Brain microvascular endothelial cell (primary cell): ENCODE measurements at regions of chr15 and their contacts with region 1.

Region 1: DNA sequence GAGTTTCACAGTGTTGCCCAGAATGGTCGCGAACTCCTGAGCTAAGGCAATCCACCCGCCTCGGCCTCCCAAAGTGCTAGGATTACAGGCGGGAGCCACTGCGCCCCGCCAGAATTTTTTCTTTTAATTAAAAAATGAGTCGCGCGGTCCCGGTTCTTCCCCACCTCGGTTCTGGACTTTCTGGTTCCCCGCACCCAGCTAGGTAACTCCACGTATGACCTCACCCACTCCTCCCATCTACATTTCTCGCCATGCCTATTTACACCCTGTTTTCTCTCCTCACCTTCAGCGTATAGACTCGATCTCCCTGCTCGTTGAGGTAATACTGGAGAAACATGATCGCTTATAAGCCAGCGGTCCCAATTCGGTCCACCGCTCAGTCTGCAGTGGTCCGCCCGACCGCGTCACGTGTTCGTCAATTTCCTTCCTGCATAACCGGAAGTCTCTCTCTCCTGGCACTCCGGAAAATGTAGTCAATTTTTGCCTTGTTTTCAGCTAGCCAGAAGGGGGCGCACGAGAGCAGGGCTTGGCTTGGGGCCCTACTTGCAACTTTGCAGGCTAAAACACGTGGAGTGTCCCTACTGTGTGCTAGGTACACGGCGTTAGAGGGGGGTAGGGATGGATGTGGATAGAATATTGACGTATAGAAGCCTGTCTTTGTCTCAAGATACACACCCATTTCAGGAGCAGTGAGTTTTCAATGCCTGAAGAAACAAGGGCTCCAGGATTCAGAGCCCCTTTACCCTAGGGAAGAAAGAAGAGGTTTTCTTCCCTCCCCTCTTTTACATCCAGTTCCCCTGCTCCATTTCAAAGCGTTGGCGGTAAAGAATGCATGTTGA is at the starts of genes NOP10 and NUTM1:
- DNase-seq: peak; percentile 90
- H3K4me3 ChIP-seq: peak within 1 kb of the TSS; percentile 97
- H3K27ac ChIP-seq: peak within 1 kb of the TSS; percentile 84
- H3K27me3 ChIP-seq: no peaks in the 10 kb centered on the region
- CTCF ChIP-seq: peak; percentile 97

Region 2: GRCh38 chr15:34241372-34242330 is 101.3 kb before region 1 on chr15:
- in situ Hi-C with region 1: loop called (anchors 25 kb)
- DNase-seq: peak; percentile 49
- H3K4me3 ChIP-seq: no peak overlapping the region
- H3K27ac ChIP-seq: no peak overlapping the region
- H3K27me3 ChIP-seq: no peaks in the 10 kb centered on the region
- CTCF ChIP-seq: peak; percentile 74